Calu3 (cell line): ENCODE measurements at regions of chr13 and their contacts with region 1.

Region 1: GRCh38 chr13:59677966-59678814 is 485.5 kb downstream of the DIAPH3 start:
- DNase-seq: no peak
- H3K4me3 Mint-ChIP-seq: no peak overlapping the region
- H3K27ac Mint-ChIP-seq: no peak overlapping the region
- H3K4me1 Mint-ChIP-seq: no peaks in the 10 kb centered on the region
- H3K27me3 Mint-ChIP-seq: no peaks in the 10 kb centered on the region
- CTCF ChIP-seq: no peak

Region 2: DNA sequence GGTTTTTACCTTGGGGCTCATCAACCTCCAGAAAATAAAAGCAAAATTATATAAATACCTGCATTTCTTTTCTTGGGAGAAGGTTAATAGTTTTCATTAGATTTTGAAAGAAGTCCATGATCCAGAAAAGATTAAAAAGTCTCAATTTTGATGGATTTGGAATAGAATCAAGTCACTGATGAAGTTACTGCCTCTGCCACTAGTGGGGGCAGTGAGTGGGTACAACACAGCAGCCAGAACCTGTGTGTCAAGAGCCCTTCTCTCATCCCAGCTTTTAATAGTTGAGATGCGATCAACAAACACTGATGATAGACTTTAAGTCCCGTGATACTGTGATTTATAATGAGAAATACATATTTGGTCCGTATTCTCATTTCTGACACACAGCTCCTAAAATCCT is 201.2 kb before region 1 on chr13:
- CTCF ChIA-PET with region 1: no interaction called
- intact Hi-C with region 1: loop called (anchors 10 kb)
- DNase-seq: no peak
- H3K4me3 Mint-ChIP-seq: no peak overlapping the region
- H3K27ac Mint-ChIP-seq: no peak overlapping the region
- H3K4me1 Mint-ChIP-seq: no peaks in the 10 kb centered on the region
- H3K27me3 Mint-ChIP-seq: no peaks in the 10 kb centered on the region
- CTCF ChIP-seq: no peak

Region 3: DNA sequence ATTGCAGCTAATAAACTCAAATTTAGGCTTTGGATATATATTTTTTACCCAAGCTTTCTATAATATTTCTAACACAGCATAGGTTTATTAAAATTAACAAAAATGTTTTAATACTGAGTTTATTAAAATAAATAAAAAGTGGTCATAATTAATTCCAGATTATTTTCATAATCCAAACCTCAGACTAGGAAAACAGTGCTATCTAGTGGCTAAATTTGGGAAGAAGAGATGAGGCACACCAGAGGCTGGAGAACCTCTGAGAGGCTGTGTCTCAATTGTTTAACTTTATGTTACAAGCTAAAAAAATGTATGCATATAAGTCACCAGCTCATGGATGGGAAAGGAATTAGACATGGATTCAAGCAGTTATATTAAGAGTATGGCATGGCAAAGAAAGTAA is 93.1 kb after region 1 on chr13:
- CTCF ChIA-PET with region 1: no interaction called
- intact Hi-C with region 1: loop called (anchors 5 kb)
- DNase-seq: no peak
- H3K4me3 Mint-ChIP-seq: no peak overlapping the region
- H3K27ac Mint-ChIP-seq: no peak overlapping the region
- H3K4me1 Mint-ChIP-seq: no peaks in the 10 kb centered on the region
- H3K27me3 Mint-ChIP-seq: no peaks in the 10 kb centered on the region
- CTCF ChIP-seq: no peak

Region 4: GRCh38 chr13:60028021-60028420 is 349.8 kb after region 1 on chr13:
- CTCF ChIA-PET with region 1: no interaction called
- intact Hi-C with region 1: no loop called
- DNase-seq: no peak
- H3K4me3 Mint-ChIP-seq: no peak overlapping the region
- H3K27ac Mint-ChIP-seq: no peak overlapping the region
- H3K4me1 Mint-ChIP-seq: no peaks in the 10 kb centered on the region
- H3K27me3 Mint-ChIP-seq: no peaks in the 10 kb centered on the region
- CTCF ChIP-seq: no peak

Region 5: DNA sequence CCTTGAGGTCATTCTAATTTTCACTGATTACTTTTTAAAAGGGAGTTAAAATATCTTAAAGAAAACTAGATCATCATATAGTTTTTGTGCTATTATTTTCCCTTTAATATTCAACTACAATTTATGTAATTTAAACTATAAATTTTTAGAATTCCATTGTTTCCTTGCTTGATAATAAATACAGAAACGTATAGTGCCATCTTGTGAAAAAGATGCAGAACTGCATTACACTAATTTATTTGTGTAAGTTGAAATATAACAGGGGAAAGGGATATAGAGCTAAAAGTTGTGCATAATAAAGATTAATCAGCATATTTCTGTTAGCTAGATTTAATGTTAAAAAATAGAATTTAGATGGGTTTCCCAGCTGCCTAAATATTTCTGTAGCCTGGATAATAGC is 657.3 kb after region 1 on chr13:
- CTCF ChIA-PET with region 1: no interaction called
- intact Hi-C with region 1: loop called (anchors 5 kb)
- DNase-seq: no peak
- H3K4me3 Mint-ChIP-seq: no peak overlapping the region
- H3K27ac Mint-ChIP-seq: no peak overlapping the region
- H3K4me1 Mint-ChIP-seq: no peaks in the 10 kb centered on the region
- H3K27me3 Mint-ChIP-seq: peaks cover 13% of the 10 kb centered on the region
- CTCF ChIP-seq: no peak